T-cell (primary cell): ENCODE measurements at regions of chr19 and their contacts with region 1.

Region 1: DNA sequence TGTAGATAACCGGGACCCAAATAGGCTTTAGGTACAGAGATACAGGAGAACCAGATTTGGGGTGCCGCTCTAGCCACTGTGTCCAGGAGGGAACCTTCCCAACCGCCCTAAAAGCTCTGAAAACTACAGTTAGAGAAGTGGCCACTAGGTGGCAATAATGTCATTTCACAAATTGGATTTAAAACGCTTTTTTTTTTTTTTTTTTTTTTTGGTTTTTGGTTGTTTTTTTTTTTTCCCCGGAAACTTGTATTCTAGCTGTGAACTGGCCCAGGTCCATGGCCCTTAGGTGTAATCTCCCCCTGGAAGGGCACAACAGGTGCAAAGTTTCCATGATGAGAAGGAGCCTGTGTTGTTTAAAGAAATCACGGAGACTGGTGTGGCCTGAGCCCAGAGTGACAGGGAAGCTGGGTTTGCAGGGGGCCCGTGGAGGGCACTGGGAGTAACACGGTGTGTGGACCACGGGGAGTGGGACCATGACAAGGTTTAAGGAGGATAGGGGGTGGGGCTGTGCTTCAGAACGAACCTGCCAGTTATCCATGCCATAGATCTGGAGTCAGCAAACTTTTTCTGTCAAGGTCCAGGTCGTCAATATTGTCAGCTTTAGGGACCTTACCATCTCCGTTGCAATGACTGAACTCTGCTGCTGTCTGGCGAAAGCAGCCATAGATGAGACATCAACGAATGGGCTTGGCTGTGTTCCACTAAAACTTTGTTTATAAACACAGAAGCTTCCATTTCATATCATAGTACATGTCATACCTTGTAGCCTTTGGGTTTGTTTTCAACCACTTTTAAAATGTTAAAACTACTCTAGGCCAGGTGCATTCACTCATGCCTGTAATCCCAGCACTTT is 10.1 kb downstream of the OR1I1 start:
- DNase-seq: peak in 28 of 35 experiments; percentile 7 to 87 (median 30)
- ATAC-seq: peak; percentile 23 to 69 (median 44)
- H3K4me3 ChIP-seq: no peak overlapping the region
- H3K4me3 Mint-ChIP-seq: peak overlapping the region in 1 of 3 donors; percentile 43
- H3K27ac ChIP-seq: no peak overlapping the region
- H3K27ac Mint-ChIP-seq: peak overlapping the region; percentile 31 to 82
- H3K4me1 ChIP-seq: peaks cover 0 to 5% of the 10 kb centered on the region in 2 experiments
- H3K4me1 Mint-ChIP-seq: peaks cover 0 to 5% (median 5%) of the 10 kb centered on the region in 3 donors
- H3K27me3 ChIP-seq: peaks cover 0 to 27% of the 10 kb centered on the region in 2 experiments
- H3K27me3 Mint-ChIP-seq: peaks cover 12 to 19% of the 10 kb centered on the region in 2 donors

Region 2: DNA sequence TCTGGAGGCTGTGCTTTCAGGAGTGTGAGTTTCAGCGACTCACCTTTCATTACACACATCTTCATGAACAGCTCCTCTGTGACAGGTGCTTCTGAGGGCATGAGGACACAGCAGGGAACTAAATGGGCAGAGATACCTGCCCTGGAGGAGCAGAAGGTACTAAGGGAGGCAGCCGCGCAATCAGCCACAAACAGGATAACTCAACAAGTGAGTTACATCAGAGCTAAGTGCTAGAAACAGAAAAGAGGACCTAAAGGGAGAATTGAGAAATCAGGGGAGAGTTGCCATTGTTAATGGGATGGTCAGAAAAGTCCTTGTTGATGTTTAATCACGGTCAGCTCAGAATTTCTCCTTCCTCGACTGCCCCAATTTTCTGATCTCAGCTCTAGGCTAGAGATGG is 57.6 kb after region 1 on chr19:
- CTCF ChIA-PET with region 1: interaction called, 6 to 10 read pairs
- POLR2A ChIA-PET with region 1: no interaction called
- DNase-seq: no peak
- ATAC-seq: no peak
- H3K4me3 ChIP-seq: no peak overlapping the region
- H3K4me3 Mint-ChIP-seq: no peak overlapping the region
- H3K27ac ChIP-seq: no peak overlapping the region
- H3K27ac Mint-ChIP-seq: no peak overlapping the region
- H3K4me1 ChIP-seq: peaks cover 0 to 4% of the 10 kb centered on the region in 2 experiments
- H3K4me1 Mint-ChIP-seq: peaks cover 9 to 24% (median 20%) of the 10 kb centered on the region in 3 donors
- H3K27me3 ChIP-seq: peaks cover 0 to 17% of the 10 kb centered on the region in 2 experiments
- H3K27me3 Mint-ChIP-seq: peaks cover 11 to 22% of the 10 kb centered on the region in 2 donors

Region 3: DNA sequence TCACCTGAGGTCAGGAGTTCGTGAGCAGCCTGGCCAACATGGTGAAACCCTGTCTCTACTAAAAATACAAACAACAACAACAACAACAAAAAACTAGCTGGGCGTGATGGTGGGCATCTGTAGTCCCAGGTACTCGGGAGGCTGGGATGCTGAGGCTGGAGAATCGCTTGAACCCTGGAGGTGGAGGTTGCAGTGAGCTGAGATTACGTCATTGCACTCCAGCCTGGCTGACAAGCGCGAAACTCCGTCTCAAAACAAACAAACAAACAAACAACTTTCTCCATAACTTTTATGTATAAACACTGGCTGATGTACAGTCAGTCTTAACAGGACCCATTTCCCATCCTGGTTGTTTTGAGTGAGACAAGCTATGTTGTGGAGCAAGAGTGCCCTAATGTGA is 517.1 kb after region 1 on chr19:
- CTCF ChIA-PET with region 1: no interaction called
- POLR2A ChIA-PET with region 1: interaction called in 1 of 2 experiments, 19 read pairs
- DNase-seq: no peak
- ATAC-seq: no peak
- H3K4me3 ChIP-seq: no peak overlapping the region
- H3K4me3 Mint-ChIP-seq: no peak overlapping the region
- H3K27ac ChIP-seq: no peak overlapping the region
- H3K27ac Mint-ChIP-seq: peak overlapping the region in 1 of 2 donors; percentile 28
- H3K4me1 ChIP-seq: no peaks in the 10 kb centered on the region
- H3K4me1 Mint-ChIP-seq: no peaks in the 10 kb centered on the region
- H3K27me3 ChIP-seq: peaks cover 0 to 6% of the 10 kb centered on the region in 2 experiments
- H3K27me3 Mint-ChIP-seq: peaks cover 1 to 5% of the 10 kb centered on the region in 2 donors